Heart right ventricle (tissue), 16 donors: ENCODE measurements at regions of chr9 and their contacts with region 1.

Region 1: GRCh38 chr9:84170521-84171141 is 169.9 kb downstream of the SLC28A3 start:
- DNase-seq: peak; percentile 83 to 90
- ATAC-seq: peak; percentile 96 to 99 (median 98)
- H3K4me3 ChIP-seq: no peak overlapping the region
- H3K27ac ChIP-seq: peak overlapping the region in 7 of 10 donors; percentile 35 to 63 (median 59)
- H3K4me1 ChIP-seq: peaks cover 0 to 33% (median 15%) of the 10 kb centered on the region in 9 donors
- H3K27me3 ChIP-seq: no peaks in the 10 kb centered on the region
- CTCF ChIP-seq: peak in 5 of 9 donors; percentile 14 to 37 (median 28)

Region 2: GRCh38 chr9:83027153-83027891 is 1143.3 kb before region 1 on chr9:
- intact Hi-C with region 1: no loop called
- DNase-seq: no peak
- ATAC-seq: no peak
- H3K4me3 ChIP-seq: no peak overlapping the region
- H3K27ac ChIP-seq: no peak overlapping the region
- H3K4me1 ChIP-seq: no peaks in the 10 kb centered on the region
- H3K27me3 ChIP-seq: peaks cover 0 to 3% (median 0%) of the 10 kb centered on the region in 7 donors
- CTCF ChIP-seq: no peak

Region 3: GRCh38 chr9:83956434-83957247 is 214.0 kb before region 1 on chr9:
- intact Hi-C with region 1: loop called in 2 of 10 experiments (anchors 10 kb)
- DNase-seq: peak; percentile 78 to 81
- ATAC-seq: peak; percentile 92 to 97 (median 94)
- H3K4me3 ChIP-seq: peak overlapping the region; percentile 60 to 85 (median 80)
- H3K27ac ChIP-seq: peak overlapping the region; percentile 28 to 92 (median 88)
- H3K4me1 ChIP-seq: peaks cover 4 to 23% (median 17%) of the 10 kb centered on the region in 9 donors
- H3K27me3 ChIP-seq: no peaks in the 10 kb centered on the region
- CTCF ChIP-seq: no peak

Region 4: GRCh38 chr9:83986765-83987401 is 183.7 kb before region 1 on chr9:
- intact Hi-C with region 1: loop called in 2 of 10 experiments (anchors 5 kb)
- DNase-seq: no peak
- ATAC-seq: peak in 5 of 8 donors; percentile 27 to 72 (median 42)
- H3K4me3 ChIP-seq: no peak overlapping the region
- H3K27ac ChIP-seq: no peak overlapping the region
- H3K4me1 ChIP-seq: peaks cover 0 to 32% (median 5%) of the 10 kb centered on the region in 9 donors
- H3K27me3 ChIP-seq: no peaks in the 10 kb centered on the region
- CTCF ChIP-seq: no peak

Region 5: GRCh38 chr9:84061594-84062193 is 108.9 kb before region 1 on chr9:
- intact Hi-C with region 1: loop called in 5 of 10 experiments (anchors 5 to 10 kb)
- DNase-seq: no peak
- ATAC-seq: peak; percentile 71 to 93 (median 84)
- H3K4me3 ChIP-seq: no peak overlapping the region
- H3K27ac ChIP-seq: peak overlapping the region in 8 of 10 donors; percentile 43 to 79 (median 76)
- H3K4me1 ChIP-seq: peaks cover 0 to 23% (median 6%) of the 10 kb centered on the region in 9 donors
- H3K27me3 ChIP-seq: no peaks in the 10 kb centered on the region
- CTCF ChIP-seq: no peak

Region 6: GRCh38 chr9:84261082-84261746 is 90.6 kb after region 1 on chr9:
- intact Hi-C with region 1: loop called in 4 of 10 experiments (anchors 5 to 10 kb)
- DNase-seq: peak; percentile 82 to 83
- ATAC-seq: peak; percentile 91 to 99 (median 96)
- H3K4me3 ChIP-seq: peak overlapping the region in 6 of 10 donors; percentile 25 to 42 (median 36)
- H3K27ac ChIP-seq: no peak overlapping the region
- H3K4me1 ChIP-seq: peaks cover 0 to 8% (median 0%) of the 10 kb centered on the region in 9 donors
- H3K27me3 ChIP-seq: peaks cover 0 to 10% (median 0%) of the 10 kb centered on the region in 7 donors
- CTCF ChIP-seq: peak; percentile 68 to 97 (median 94)